ENCODE measurements at regions of chr16 and their contacts with region 1.

Region 1: GRCh38 chr16:27639561-27640276 is 89.8 kb downstream of the KATNIP start:
- DNase-seq: peak; percentile 18
- H3K4me3 ChIP-seq: no peak overlapping the region
- H3K27ac ChIP-seq: no peak overlapping the region
- H3K27me3 ChIP-seq: no peaks in the 10 kb centered on the region
- CTCF ChIP-seq: peak; percentile 89

Region 2: GRCh38 chr16:27598931-27599565 is 40.7 kb before region 1 on chr16:
- CTCF ChIA-PET with region 1: interaction called, 10 read pairs
- POLR2A ChIA-PET with region 1: no interaction called
- DNase-seq: no peak
- H3K4me3 ChIP-seq: no peak overlapping the region
- H3K27ac ChIP-seq: no peak overlapping the region
- H3K27me3 ChIP-seq: no peaks in the 10 kb centered on the region
- CTCF ChIP-seq: no peak

Region 3: GRCh38 chr16:27628241-27628942 is 11.3 kb before region 1 on chr16:
- CTCF ChIA-PET with region 1: interaction called, 49 read pairs
- POLR2A ChIA-PET with region 1: interaction called, 3 read pairs
- DNase-seq: no peak
- H3K4me3 ChIP-seq: no peak overlapping the region
- H3K27ac ChIP-seq: no peak overlapping the region
- H3K27me3 ChIP-seq: no peaks in the 10 kb centered on the region
- CTCF ChIP-seq: no peak

Region 4: GRCh38 chr16:27654212-27654611 is 14.5 kb after region 1 on chr16:
- CTCF ChIA-PET with region 1: interaction called, 17 read pairs
- POLR2A ChIA-PET with region 1: no interaction called
- DNase-seq: no peak
- H3K4me3 ChIP-seq: no peak overlapping the region
- H3K27ac ChIP-seq: no peak overlapping the region
- H3K27me3 ChIP-seq: no peaks in the 10 kb centered on the region
- CTCF ChIP-seq: no peak

Measured in AG04450 (cell line).